AG04450 (cell line): ENCODE measurements at regions of chr7 and their contacts with region 1.

Region 1: GRCh38 chr7:113404245-113404644 is 285.9 kb upstream of the SMIM30 start:
- DNase-seq: no peak
- H3K4me3 ChIP-seq: no peak overlapping the region
- H3K27ac ChIP-seq: no peak overlapping the region
- H3K27me3 ChIP-seq: no peaks in the 10 kb centered on the region
- CTCF ChIP-seq: peak; percentile 18; the same call in 1 of the 2 replicates

Region 2: GRCh38 chr7:112938863-112939573 is 465.2 kb before region 1 on chr7:
- CTCF ChIA-PET with region 1: interaction called, 10 read pairs
- POLR2A ChIA-PET with region 1: no interaction called
- DNase-seq: no peak
- H3K4me3 ChIP-seq: peak overlapping the region; percentile 81
- H3K27ac ChIP-seq: no peak overlapping the region
- H3K27me3 ChIP-seq: no peaks in the 10 kb centered on the region
- CTCF ChIP-seq: no peak

Region 3: GRCh38 chr7:113414401-113415035 is 10.3 kb after region 1 on chr7:
- CTCF ChIA-PET with region 1: no interaction called
- POLR2A ChIA-PET with region 1: no interaction called
- DNase-seq: no peak
- H3K4me3 ChIP-seq: no peak overlapping the region
- H3K27ac ChIP-seq: no peak overlapping the region
- H3K27me3 ChIP-seq: no peaks in the 10 kb centered on the region
- CTCF ChIP-seq: no peak